HepG2 (cell line): ENCODE measurements at regions of chr4 and their contacts with region 1.

Region 1: DNA sequence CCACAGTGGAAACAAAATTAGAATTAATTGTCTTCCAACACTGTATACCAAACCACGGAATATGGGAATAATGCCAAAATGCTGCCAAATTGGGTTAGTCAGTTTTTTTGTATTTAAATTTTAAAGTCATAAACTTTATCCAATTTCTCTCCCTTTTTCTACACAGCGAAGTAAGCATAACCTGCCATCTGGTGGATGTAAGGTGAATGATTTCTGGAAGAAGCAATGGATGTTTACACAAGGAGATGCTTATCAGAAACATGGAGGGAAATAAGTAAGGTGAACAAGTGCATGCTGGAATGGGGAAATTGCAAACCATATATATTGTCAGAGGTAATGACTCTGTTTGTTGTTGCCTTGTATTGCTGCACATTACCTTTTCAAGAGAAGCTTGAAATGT is 691.9 kb downstream of the TECRL start:
- DNase-seq: peak; percentile 21
- ATAC-seq: no peak
- H3K4me3 ChIP-seq: no peak overlapping the region
- H3K27ac ChIP-seq: no peak overlapping the region
- H3K4me1 ChIP-seq: no peaks in the 10 kb centered on the region
- H3K27me3 ChIP-seq: no peaks in the 10 kb centered on the region
- CTCF ChIP-seq: peak; percentile 15; the same call in 1 of the 2 replicates
- EP300 ChIP-seq: no peak
- POLR2A ChIP-seq: no peak
- RAD21 ChIP-seq: no peak

Region 2: GRCh38 chr4:63296773-63297172 is 420.6 kb before region 1 on chr4:
- CTCF ChIA-PET with region 1: no interaction called
- POLR2A ChIA-PET with region 1: no interaction called
- in situ Hi-C with region 1: no loop called
- intact Hi-C with region 1: loop called (anchors 2 kb)
- DNase-seq: peak; percentile 4
- ATAC-seq: no peak
- H3K4me3 ChIP-seq: no peak overlapping the region
- H3K27ac ChIP-seq: no peak overlapping the region
- H3K4me1 ChIP-seq: no peaks in the 10 kb centered on the region
- H3K27me3 ChIP-seq: no peaks in the 10 kb centered on the region
- CTCF ChIP-seq: no peak
- EP300 ChIP-seq: no peak
- POLR2A ChIP-seq: no peak
- RAD21 ChIP-seq: no peak

Region 3: DNA sequence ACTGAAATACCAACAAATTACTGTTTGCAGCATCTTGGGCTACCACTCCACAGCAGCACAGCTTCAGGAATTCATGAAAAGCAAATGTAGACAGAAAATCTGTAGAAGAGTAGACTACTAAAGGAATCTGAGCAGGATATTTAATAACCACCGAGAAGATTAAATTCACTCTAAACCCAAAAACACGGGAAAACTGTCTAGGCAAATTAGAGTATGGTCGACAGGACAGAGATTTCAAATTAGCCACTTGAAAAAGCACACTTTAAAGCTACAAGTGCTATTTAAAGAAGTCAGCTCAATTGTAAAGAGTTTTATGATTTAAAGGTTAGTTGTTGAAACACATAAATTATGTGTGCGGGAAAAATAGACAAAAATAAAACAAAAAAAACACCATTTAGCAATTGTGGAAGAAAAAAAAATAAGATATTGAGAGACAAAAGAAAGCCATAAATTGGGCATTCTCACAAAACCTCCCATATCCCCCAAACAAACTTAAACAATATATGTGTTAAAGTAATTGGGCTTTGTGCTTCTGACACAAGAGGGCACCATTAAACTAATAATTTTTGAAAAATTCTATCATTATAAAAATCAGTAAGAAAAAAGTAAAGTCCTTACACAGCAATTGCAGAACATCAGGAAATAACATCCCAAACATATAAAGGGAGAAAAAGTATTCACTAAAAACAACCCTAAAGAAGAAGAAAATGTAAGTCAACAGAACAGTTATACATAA is 189.0 kb before region 1 on chr4:
- CTCF ChIA-PET with region 1: interaction called, 3 read pairs
- POLR2A ChIA-PET with region 1: no interaction called
- in situ Hi-C with region 1: no loop called
- intact Hi-C with region 1: loop called (anchors 1 kb)
- DNase-seq: no peak
- ATAC-seq: no peak
- H3K4me3 ChIP-seq: no peak overlapping the region
- H3K27ac ChIP-seq: no peak overlapping the region
- H3K4me1 ChIP-seq: no peaks in the 10 kb centered on the region
- H3K27me3 ChIP-seq: no peaks in the 10 kb centered on the region; a peak in 1 of 5 replicates
- CTCF ChIP-seq: no peak
- EP300 ChIP-seq: no peak
- POLR2A ChIP-seq: no peak
- RAD21 ChIP-seq: no peak

Region 4: GRCh38 chr4:63894161-63894560 is 176.8 kb after region 1 on chr4:
- CTCF ChIA-PET with region 1: no interaction called
- POLR2A ChIA-PET with region 1: no interaction called
- in situ Hi-C with region 1: no loop called
- intact Hi-C with region 1: no loop called
- DNase-seq: no peak
- ATAC-seq: no peak
- H3K4me3 ChIP-seq: no peak overlapping the region
- H3K27ac ChIP-seq: no peak overlapping the region
- H3K4me1 ChIP-seq: no peaks in the 10 kb centered on the region
- H3K27me3 ChIP-seq: no peaks in the 10 kb centered on the region
- CTCF ChIP-seq: no peak
- EP300 ChIP-seq: no peak
- POLR2A ChIP-seq: no peak
- RAD21 ChIP-seq: no peak